B cell (primary cell): ENCODE measurements at regions of chr12 and their contacts with region 1.

Region 1: GRCh38 chr12:123983822-123984485 is 10.9 kb downstream of the ZNF664 start:
- DNase-seq: peak; percentile 70
- ATAC-seq: peak; percentile 71
- H3K4me3 ChIP-seq: no peak overlapping the region
- H3K4me3 Mint-ChIP-seq: no peak overlapping the region
- H3K27ac ChIP-seq: no peak overlapping the region
- H3K27ac Mint-ChIP-seq: no peak overlapping the region
- H3K4me1 ChIP-seq: peaks cover 13 to 14% of the 10 kb centered on the region in 2 donors
- H3K4me1 Mint-ChIP-seq: peaks cover 22% of the 10 kb centered on the region
- H3K27me3 ChIP-seq: no peaks in the 10 kb centered on the region
- H3K27me3 Mint-ChIP-seq: no peaks in the 10 kb centered on the region
- CTCF ChIP-seq: peak; percentile 72

Region 2: GRCh38 chr12:123801573-123802178 is 182.3 kb before region 1 on chr12:
- CTCF ChIA-PET with region 1: interaction called, 3 read pairs
- POLR2A ChIA-PET with region 1: no interaction called
- intact Hi-C with region 1: loop called (anchors 5 kb)
- DNase-seq: peak; percentile 8
- ATAC-seq: no peak
- H3K4me3 ChIP-seq: no peak overlapping the region
- H3K4me3 Mint-ChIP-seq: no peak overlapping the region
- H3K27ac ChIP-seq: no peak overlapping the region
- H3K27ac Mint-ChIP-seq: no peak overlapping the region
- H3K4me1 ChIP-seq: no peaks in the 10 kb centered on the region
- H3K4me1 Mint-ChIP-seq: no peaks in the 10 kb centered on the region
- H3K27me3 ChIP-seq: no peaks in the 10 kb centered on the region
- H3K27me3 Mint-ChIP-seq: no peaks in the 10 kb centered on the region
- CTCF ChIP-seq: peak; percentile 37

Region 3: GRCh38 chr12:123905319-123905925 is 78.5 kb before region 1 on chr12:
- CTCF ChIA-PET with region 1: interaction called, 72 read pairs
- POLR2A ChIA-PET with region 1: no interaction called
- intact Hi-C with region 1: no loop called
- DNase-seq: peak; percentile 77
- ATAC-seq: peak; percentile 62
- H3K4me3 ChIP-seq: no peak overlapping the region
- H3K4me3 Mint-ChIP-seq: no peak overlapping the region
- H3K27ac ChIP-seq: no peak overlapping the region
- H3K27ac Mint-ChIP-seq: no peak overlapping the region
- H3K4me1 ChIP-seq: no peaks in the 10 kb centered on the region
- H3K4me1 Mint-ChIP-seq: peaks cover 4% of the 10 kb centered on the region
- H3K27me3 ChIP-seq: peaks cover 0 to 6% (median 0%) of the 10 kb centered on the region in 4 experiments
- H3K27me3 Mint-ChIP-seq: peaks cover 16% of the 10 kb centered on the region
- CTCF ChIP-seq: peak; percentile 83

Region 4: DNA sequence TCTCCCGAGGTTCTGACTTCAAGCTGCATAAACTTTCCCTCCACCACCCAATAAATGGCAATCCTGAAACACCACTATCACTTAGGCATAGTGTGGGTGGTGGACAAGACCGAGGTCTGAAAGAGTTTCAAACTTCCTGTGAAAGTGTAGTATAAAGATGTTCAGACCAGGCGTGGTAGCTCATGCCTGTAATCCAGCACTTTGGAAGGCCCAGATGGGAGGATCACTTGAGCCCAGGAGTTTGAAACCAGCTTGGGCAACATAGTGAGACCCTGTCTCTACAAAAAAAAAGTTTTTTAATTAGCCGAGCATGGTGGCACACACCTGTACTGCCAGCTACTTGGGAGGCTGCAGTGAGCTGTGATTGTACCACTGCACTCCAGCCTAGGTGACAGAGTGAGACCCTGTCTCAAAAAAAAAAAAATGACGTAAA is 73.2 kb before region 1 on chr12:
- CTCF ChIA-PET with region 1: interaction called, 72 read pairs
- POLR2A ChIA-PET with region 1: no interaction called
- intact Hi-C with region 1: no loop called
- DNase-seq: peak; percentile 23
- ATAC-seq: no peak
- H3K4me3 ChIP-seq: no peak overlapping the region
- H3K4me3 Mint-ChIP-seq: no peak overlapping the region
- H3K27ac ChIP-seq: no peak overlapping the region
- H3K27ac Mint-ChIP-seq: peak overlapping the region; percentile 18
- H3K4me1 ChIP-seq: no peaks in the 10 kb centered on the region
- H3K4me1 Mint-ChIP-seq: no peaks in the 10 kb centered on the region
- H3K27me3 ChIP-seq: no peaks in the 10 kb centered on the region
- H3K27me3 Mint-ChIP-seq: peaks cover 5% of the 10 kb centered on the region
- CTCF ChIP-seq: no peak

Region 5: DNA sequence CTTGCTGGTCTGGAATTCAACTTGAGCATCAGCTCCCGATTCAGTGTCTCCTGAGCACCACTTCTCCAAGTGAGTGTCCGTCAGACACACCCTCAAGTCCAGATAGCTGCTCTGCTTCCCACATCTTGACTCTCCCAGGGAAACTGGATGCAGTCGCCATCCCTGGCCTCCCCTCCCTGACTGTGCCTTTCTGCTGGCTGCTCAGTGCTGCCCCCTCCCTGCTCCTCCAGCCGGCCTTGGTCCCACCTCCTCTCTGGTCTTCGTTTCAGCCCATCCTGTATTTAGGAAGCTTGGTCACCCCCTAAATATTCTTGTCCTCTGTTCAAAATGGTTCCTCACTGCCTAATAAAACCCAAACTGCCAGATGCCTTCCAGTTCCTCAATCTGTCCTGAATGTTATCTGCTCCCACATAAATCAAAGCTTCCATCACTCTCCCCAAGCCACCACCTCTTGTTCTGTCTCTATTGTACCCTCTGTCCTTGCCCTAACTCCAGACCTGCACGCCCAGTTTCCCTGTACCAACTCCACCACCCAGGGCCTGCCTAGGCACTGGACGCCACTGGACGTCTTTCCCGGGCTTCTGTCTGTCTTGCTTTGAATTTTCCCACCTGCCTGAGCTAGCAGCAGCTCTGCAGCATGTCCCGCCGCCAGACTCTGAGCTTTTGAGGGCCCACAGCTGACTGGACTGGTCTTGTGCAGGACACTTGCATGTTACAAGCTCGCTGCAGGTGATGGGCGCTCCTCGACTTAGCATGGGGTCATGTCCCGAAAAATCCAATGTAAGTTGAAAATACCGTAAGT is 45.1 kb before region 1 on chr12:
- CTCF ChIA-PET with region 1: no interaction called
- POLR2A ChIA-PET with region 1: no interaction called
- intact Hi-C with region 1: no loop called
- DNase-seq: no peak
- ATAC-seq: no peak
- H3K4me3 ChIP-seq: no peak overlapping the region
- H3K4me3 Mint-ChIP-seq: peak overlapping the region; percentile 64
- H3K27ac ChIP-seq: no peak overlapping the region
- H3K27ac Mint-ChIP-seq: no peak overlapping the region
- H3K4me1 ChIP-seq: peaks cover 15 to 18% of the 10 kb centered on the region in 2 donors
- H3K4me1 Mint-ChIP-seq: peaks cover 23% of the 10 kb centered on the region
- H3K27me3 ChIP-seq: no peaks in the 10 kb centered on the region
- H3K27me3 Mint-ChIP-seq: no peaks in the 10 kb centered on the region
- CTCF ChIP-seq: no peak

Region 6: DNA sequence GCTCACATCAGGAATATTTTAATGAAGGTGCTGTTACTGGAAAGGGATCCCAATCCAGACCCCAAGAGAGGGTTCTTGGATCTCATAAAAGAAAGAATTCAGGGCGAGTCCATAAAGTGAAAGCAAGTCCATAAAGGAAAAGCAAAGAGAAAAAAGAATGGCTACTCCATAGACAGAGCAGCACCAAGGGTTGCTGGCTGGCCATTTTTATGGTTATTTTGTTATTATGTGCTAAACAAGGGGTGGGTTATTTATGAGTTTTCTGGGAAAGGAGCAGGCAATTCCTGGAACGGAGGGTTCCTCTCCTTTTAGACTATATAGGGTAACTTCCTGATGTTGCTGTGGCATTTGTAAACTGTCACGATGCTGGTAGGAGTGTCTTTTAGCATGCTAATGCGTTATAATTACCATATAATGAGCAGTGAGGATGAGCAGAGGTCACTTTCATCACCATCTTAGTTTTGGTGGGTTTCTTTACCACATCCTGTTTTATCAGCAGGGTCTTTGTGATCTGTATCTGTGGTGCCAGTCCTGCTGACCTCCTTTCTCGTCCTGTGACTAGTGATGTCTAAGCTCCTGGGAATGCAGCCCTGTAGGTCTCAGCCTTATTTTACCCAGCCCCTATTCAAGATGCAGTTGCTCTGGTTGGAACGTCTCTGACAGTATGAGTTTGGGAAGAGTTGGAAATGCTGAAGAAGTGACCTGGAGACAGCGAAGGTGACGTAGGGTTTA is 89.5 kb after region 1 on chr12:
- CTCF ChIA-PET with region 1: no interaction called
- POLR2A ChIA-PET with region 1: no interaction called
- intact Hi-C with region 1: no loop called
- DNase-seq: no peak
- ATAC-seq: no peak
- H3K4me3 ChIP-seq: no peak overlapping the region
- H3K4me3 Mint-ChIP-seq: no peak overlapping the region
- H3K27ac ChIP-seq: no peak overlapping the region
- H3K27ac Mint-ChIP-seq: no peak overlapping the region
- H3K4me1 ChIP-seq: no peaks in the 10 kb centered on the region
- H3K4me1 Mint-ChIP-seq: no peaks in the 10 kb centered on the region
- H3K27me3 ChIP-seq: no peaks in the 10 kb centered on the region
- H3K27me3 Mint-ChIP-seq: peaks cover 7% of the 10 kb centered on the region
- CTCF ChIP-seq: no peak